Activated B cell treated with CpG ODN at 0.5 μM for 24 hours (primary cell): ENCODE measurements at regions of chr2 and their contacts with region 1.

Region 1: GRCh38 chr2:136255648-136256463 is 137.9 kb upstream of the CXCR4 start:
- DNase-seq: no peak
- ATAC-seq: peak; percentile 63
- H3K4me3 Mint-ChIP-seq: peak overlapping the region; percentile 55
- H3K27ac Mint-ChIP-seq: peak overlapping the region; percentile 92
- H3K4me1 Mint-ChIP-seq: peaks cover 86% of the 10 kb centered on the region
- H3K27me3 Mint-ChIP-seq: no peaks in the 10 kb centered on the region
- CTCF ChIP-seq: no peak

Region 2: GRCh38 chr2:135985018-135985825 is 270.6 kb before region 1 on chr2 and contains the start of gene DARS1:
- CTCF ChIA-PET with region 1: no interaction called
- POLR2A ChIA-PET with region 1: interaction called, 5 read pairs
- intact Hi-C with region 1: loop called (anchors 2 kb)
- DNase-seq: peak; percentile 80
- ATAC-seq: peak; percentile 86
- H3K4me3 Mint-ChIP-seq: peak within 1 kb of the TSS; percentile 95
- H3K27ac Mint-ChIP-seq: peak within 1 kb of the TSS; percentile 97
- H3K4me1 Mint-ChIP-seq: peaks cover 50% of the 10 kb centered on the region
- H3K27me3 Mint-ChIP-seq: no peaks in the 10 kb centered on the region
- CTCF ChIP-seq: no peak
- total RNA-seq, gene DARS1: 96.3 and 103 TPM in 2 replicates

Region 3: DNA sequence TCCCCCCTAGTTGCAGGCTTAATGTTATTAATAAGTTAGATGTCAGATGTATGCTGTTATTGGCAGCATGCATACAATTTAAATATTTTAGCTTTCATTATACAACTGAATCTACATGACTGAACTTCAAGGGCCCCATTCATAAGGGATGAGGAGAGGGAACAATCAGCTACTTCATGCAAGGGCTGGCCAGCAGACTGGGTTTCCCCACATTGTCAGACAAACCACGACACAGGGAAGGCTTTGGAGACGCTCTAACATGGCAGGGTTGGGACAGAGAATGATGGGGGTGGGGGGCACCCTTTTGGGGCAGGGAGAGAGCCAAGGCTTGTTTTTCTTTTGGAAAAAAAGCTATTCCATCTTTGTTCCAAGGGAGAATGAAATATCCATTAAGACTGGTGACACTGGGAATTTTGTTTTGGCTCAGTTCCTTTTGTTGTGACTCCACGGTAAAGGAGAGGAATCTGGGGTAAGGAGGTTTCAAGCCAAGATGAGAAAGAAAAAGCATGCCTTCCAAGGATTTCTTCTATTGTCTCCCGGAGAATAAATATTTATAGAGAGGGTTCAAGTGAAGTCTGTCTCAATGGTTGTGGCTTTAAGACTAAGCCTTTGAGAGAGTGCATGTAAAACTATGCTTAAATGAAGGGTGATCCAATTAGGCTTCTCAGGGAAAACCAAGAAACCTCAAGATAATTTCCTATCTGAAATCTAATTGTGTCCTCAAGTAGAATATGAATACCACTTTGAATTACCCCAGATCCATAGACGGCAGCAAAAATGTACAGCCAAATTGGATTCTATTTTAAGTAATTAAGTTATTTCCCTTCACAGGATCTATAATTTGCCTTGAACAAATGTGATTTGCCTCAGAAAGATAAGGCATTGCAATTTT is 143.3 kb before region 1 on chr2:
- CTCF ChIA-PET with region 1: no interaction called
- POLR2A ChIA-PET with region 1: interaction called, 63 read pairs
- intact Hi-C with region 1: no loop called
- DNase-seq: no peak
- ATAC-seq: no peak
- H3K4me3 Mint-ChIP-seq: peak overlapping the region; percentile 96
- H3K27ac Mint-ChIP-seq: peak overlapping the region; percentile 24
- H3K4me1 Mint-ChIP-seq: peaks cover 83% of the 10 kb centered on the region
- H3K27me3 Mint-ChIP-seq: no peaks in the 10 kb centered on the region
- CTCF ChIP-seq: no peak

Region 4: DNA sequence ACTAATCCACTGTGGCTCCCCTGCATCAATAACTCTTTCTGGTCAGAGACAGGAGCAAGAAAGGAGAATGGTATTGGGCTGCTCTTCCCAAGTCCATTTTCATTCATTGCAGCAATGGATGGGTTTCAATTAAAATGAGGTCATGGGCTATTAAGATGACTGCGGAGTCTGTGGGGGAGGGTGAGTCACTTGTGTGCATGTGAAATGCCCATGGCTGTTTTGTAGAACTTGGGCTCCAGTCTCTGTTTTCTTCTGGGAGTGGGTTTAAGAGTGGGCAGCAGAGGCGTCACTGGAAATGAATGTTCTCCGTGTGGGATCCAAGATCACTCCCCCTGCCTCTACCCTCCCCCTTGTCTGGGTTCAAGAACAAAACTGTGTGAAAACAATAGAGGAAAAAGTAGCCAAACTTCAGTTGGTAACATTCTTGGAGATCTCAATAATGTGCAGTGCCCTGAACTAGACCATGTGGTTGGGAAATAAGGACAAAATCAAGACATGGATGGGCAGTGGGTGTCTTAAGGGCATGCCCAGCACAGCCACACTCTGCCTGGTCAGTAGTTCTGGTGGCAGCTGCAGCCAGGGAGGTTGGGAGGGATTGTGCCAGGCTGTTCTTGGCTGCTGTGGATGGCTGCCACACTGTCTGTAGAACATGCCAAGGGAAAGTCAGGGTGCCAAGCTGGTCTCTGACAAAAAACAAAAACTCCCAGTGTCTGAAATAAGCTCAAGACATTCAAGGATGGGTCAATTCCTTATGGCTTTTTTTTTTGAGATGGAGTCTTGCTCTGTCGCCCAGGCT is 69.7 kb before region 1 on chr2:
- CTCF ChIA-PET with region 1: no interaction called
- POLR2A ChIA-PET with region 1: no interaction called
- intact Hi-C with region 1: no loop called
- DNase-seq: no peak
- ATAC-seq: no peak
- H3K4me3 Mint-ChIP-seq: no peak overlapping the region
- H3K27ac Mint-ChIP-seq: no peak overlapping the region
- H3K4me1 Mint-ChIP-seq: peaks cover 23% of the 10 kb centered on the region
- H3K27me3 Mint-ChIP-seq: no peaks in the 10 kb centered on the region
- CTCF ChIP-seq: no peak

Region 5: DNA sequence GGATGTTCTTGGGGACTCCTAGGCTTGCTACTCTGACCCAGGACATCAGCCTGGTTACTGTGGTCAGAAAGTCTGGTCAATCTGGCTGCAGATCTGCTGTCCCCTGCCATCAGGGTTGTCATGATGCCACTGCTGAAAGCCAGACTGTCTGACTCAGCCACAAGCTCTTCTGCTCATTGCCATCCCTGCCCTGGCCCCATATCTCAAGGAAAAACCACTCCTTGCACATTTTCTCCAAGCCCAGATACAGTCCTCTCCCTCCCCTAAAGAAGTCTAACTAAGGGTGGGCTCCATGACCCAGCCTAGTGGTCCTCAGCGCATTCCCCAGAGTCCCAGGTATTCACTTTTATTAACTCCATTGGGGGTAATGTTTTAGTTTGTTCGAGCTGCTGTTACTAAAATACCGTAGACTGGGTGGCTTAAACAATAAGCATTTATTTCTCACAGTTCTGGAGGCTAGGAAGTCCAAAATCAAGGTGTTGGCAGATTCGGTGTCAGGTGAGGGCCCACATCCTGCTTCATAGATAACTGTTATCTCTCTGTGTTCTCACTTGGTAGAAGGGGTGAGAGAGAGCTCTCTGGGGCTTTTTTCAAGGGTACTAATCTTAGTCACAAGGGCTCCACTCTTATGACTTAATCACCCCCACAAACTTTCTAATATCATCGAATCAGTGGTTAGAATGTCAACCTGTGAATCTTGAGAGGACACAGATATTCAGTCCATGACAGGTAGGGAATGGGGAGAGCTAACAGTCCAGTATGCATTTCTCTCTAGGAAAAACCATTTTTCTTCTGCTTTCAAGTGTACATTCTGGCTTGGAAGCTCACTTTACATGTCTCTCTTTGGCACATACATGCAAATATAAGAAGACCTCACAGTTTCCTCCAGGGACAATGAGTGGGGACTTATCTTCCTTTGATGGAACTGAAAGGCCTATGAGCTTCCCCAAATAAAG is 43.2 kb before region 1 on chr2:
- CTCF ChIA-PET with region 1: interaction called, 10 read pairs
- POLR2A ChIA-PET with region 1: interaction called, 103 read pairs
- intact Hi-C with region 1: loop called (anchors 1 kb)
- DNase-seq: no peak
- ATAC-seq: peak; percentile 72
- H3K4me3 Mint-ChIP-seq: peak overlapping the region; percentile 64
- H3K27ac Mint-ChIP-seq: peak overlapping the region; percentile 97
- H3K4me1 Mint-ChIP-seq: peaks cover 97% of the 10 kb centered on the region
- H3K27me3 Mint-ChIP-seq: no peaks in the 10 kb centered on the region
- CTCF ChIP-seq: no peak

Region 6: GRCh38 chr2:136281281-136282114 is 25.6 kb after region 1 on chr2:
- CTCF ChIA-PET with region 1: interaction called, 4 read pairs
- POLR2A ChIA-PET with region 1: interaction called, 5 read pairs
- intact Hi-C with region 1: loop called (anchors 2 kb)
- DNase-seq: no peak
- ATAC-seq: peak; percentile 76
- H3K4me3 Mint-ChIP-seq: peak overlapping the region; percentile 58
- H3K27ac Mint-ChIP-seq: peak overlapping the region; percentile 73
- H3K4me1 Mint-ChIP-seq: peaks cover 77% of the 10 kb centered on the region
- H3K27me3 Mint-ChIP-seq: no peaks in the 10 kb centered on the region
- CTCF ChIP-seq: no peak

Region 7: DNA sequence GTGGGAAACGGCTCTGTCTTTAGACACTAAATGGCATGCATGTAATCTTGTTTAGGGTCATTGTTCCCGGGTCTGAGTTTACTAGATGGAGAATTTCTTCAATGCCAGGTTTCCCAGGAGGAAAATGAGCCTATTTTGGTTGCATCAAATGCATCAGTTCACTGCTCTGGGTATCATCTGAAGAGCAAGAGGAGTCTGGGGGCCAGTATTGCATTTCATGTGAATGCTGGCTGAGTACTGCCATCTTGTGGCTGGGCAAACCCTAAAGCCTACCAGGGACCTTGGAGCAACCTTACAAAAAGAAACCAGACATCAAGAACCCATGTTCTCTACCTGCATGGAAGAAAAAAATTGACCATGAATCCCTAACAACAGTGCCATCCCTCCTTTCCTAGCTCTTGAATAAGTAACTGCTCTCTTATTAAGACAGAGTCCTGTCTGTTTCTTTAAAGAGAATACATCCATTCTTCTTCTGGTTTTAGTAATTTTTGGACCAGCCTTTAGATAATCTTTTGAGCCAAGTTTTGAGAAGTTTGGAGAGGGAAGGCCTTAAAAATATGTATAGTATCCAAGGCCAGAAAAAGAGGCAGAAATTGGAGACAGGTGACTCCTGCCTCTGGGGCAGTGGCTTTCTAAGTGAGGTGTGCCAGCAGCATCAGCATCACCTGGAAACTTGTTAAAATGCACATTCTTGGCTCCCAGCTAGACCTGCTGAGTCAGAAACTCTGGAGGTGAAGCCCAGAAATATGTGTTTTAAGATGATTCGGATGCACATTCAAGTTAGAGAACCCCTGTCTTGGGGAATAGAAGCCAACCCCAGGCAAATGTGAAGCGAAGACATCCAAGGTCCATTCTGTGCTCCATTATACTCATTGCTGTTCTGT is 123.1 kb after region 1 on chr2:
- CTCF ChIA-PET with region 1: interaction called, 30 read pairs
- POLR2A ChIA-PET with region 1: interaction called, 45 read pairs
- intact Hi-C with region 1: loop called (anchors 1 kb)
- DNase-seq: no peak
- ATAC-seq: peak; percentile 40
- H3K4me3 Mint-ChIP-seq: no peak overlapping the region
- H3K27ac Mint-ChIP-seq: peak overlapping the region; percentile 92
- H3K4me1 Mint-ChIP-seq: peaks cover 81% of the 10 kb centered on the region
- H3K27me3 Mint-ChIP-seq: no peaks in the 10 kb centered on the region
- CTCF ChIP-seq: peak; percentile 44